ENCODE measurements at regions of chr10 and their contacts with region 1.

Region 1: DNA sequence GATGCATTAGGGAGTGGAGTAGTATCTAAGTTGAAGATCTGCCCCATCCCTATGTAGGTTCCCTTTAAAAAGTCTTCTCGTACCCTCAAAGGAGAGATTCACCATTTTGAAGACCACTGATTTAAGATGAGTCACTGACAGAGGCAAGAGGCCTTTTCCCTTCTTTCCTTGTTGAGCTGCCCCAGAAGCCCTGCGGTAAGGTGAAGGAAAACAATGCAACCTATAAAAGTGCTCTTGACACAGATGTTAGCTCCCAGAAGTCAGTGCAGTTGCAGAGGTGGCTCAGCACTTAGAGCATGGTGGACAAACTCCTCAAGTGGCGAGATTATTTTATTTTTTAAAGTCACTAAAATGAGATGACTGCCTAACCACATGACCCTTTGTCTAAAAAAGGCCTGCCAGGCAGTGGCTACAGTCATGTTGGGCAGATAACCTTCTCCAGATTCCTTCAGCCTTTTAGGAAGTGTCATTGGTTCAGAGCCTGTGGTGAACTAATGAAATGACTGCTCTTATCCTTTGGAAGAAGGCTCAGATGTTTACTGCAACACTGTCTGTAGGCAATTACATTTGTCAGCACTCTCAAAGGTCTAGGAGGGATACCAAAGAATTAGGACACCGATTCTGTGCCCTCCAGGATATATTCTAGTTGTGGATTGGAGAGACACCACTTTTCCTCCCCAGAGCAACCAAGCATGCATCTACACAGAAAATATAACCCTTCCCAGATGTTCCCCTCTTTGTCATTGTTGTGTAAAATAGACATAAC is 88.7 kb downstream of the ARID5B start:
- DNase-seq: no peak
- ATAC-seq: no peak
- H3K4me3 Mint-ChIP-seq: no peak overlapping the region
- H3K27ac Mint-ChIP-seq: no peak overlapping the region
- H3K4me1 Mint-ChIP-seq: peaks cover 63% of the 10 kb centered on the region
- H3K27me3 Mint-ChIP-seq: no peaks in the 10 kb centered on the region
- CTCF ChIP-seq: no peak

Region 2: DNA sequence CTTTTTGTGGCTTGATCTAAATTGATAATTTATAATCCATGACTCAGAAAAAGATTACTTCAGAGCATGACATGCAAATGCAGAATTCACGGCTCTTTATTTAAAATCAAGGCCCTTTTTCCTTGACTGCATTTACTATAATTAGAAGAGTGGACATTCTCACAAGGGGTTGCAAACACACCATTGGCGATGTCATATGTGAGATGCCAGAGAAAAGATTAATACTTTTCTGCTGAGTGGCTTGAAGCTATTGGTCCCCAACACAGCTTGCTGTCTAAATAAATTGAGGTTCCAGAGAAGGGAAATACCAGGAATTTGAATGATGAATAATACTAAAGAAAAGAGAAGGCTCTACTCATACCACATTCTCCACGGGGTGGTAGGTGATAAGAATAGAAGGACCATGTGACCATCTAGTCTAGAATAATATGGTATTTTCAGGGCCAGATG is 167.4 kb before region 1 on chr10:
- CTCF ChIA-PET with region 1: no interaction called
- POLR2A ChIA-PET with region 1: no interaction called
- DNase-seq: no peak
- ATAC-seq: no peak
- H3K4me3 Mint-ChIP-seq: no peak overlapping the region
- H3K27ac Mint-ChIP-seq: no peak overlapping the region
- H3K4me1 Mint-ChIP-seq: peaks cover 7% of the 10 kb centered on the region
- H3K27me3 Mint-ChIP-seq: peaks cover 80% of the 10 kb centered on the region
- CTCF ChIP-seq: no peak

Region 3: DNA sequence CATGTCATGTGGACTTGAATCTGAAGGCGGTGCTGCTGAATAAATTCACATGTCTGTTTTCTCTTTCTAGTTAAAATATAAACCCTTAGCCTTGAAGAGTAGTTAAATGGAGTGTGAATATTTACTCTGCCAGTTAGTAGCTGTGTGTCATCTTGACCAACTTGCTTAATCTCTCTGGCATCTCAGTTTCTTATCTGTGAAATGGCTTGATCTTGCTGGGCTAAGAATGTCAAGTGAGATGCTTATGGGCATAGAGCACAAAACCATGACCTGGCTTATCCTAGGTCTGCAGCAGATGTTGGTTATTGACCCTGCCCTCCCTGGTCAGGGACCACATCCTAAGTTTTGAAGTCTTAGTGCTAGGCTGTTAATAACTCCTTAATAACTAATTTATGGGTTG is 72.0 kb before region 1 on chr10:
- CTCF ChIA-PET with region 1: no interaction called
- POLR2A ChIA-PET with region 1: no interaction called
- DNase-seq: no peak
- ATAC-seq: no peak
- H3K4me3 Mint-ChIP-seq: no peak overlapping the region
- H3K27ac Mint-ChIP-seq: no peak overlapping the region
- H3K4me1 Mint-ChIP-seq: no peaks in the 10 kb centered on the region
- H3K27me3 Mint-ChIP-seq: no peaks in the 10 kb centered on the region
- CTCF ChIP-seq: no peak

Region 4: GRCh38 chr10:62025901-62026879 is 36.0 kb after region 1 on chr10:
- CTCF ChIA-PET with region 1: no interaction called
- POLR2A ChIA-PET with region 1: interaction called, 10 read pairs
- DNase-seq: no peak
- ATAC-seq: no peak
- H3K4me3 Mint-ChIP-seq: no peak overlapping the region
- H3K27ac Mint-ChIP-seq: no peak overlapping the region
- H3K4me1 Mint-ChIP-seq: peaks cover 7% of the 10 kb centered on the region; the same call in 1 of the 2 replicates
- H3K27me3 Mint-ChIP-seq: peaks cover 17% of the 10 kb centered on the region
- CTCF ChIP-seq: no peak